CD8-positive, alpha-beta T cell (primary cell): ENCODE measurements at regions of chr19 and their contacts with region 1.

Region 1: DNA sequence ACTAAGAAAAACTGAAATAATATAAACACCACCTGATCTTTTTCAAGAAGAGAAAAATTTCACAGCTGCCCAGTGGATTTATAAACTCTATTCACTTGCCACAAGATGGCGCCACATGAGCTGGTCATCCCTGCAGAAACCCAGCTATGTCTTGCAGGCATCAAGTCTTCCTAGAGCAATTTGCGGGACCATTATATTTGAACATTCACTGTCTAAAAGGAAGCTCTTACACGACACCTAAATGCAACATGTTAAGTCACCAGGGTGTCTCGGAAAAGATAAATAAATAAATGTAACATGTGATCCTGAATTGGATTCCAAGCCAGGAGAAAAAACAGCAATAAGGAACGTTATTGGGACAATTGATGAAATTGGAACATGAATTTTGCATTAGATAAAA is 20.3 kb upstream of the AKT2 start:
- DNase-seq: peak; percentile 49 to 85 (median 78)
- ATAC-seq: peak; percentile 59
- H3K4me3 ChIP-seq: no peak overlapping the region
- H3K4me3 Mint-ChIP-seq: no peak overlapping the region
- H3K27ac ChIP-seq: no peak overlapping the region
- H3K27ac Mint-ChIP-seq: no peak overlapping the region
- H3K4me1 ChIP-seq: no peaks in the 10 kb centered on the region
- H3K4me1 Mint-ChIP-seq: peaks cover 2% of the 10 kb centered on the region
- H3K27me3 ChIP-seq: no peaks in the 10 kb centered on the region
- H3K27me3 Mint-ChIP-seq: no peaks in the 10 kb centered on the region
- CTCF ChIP-seq: peak; percentile 83

Region 2: DNA sequence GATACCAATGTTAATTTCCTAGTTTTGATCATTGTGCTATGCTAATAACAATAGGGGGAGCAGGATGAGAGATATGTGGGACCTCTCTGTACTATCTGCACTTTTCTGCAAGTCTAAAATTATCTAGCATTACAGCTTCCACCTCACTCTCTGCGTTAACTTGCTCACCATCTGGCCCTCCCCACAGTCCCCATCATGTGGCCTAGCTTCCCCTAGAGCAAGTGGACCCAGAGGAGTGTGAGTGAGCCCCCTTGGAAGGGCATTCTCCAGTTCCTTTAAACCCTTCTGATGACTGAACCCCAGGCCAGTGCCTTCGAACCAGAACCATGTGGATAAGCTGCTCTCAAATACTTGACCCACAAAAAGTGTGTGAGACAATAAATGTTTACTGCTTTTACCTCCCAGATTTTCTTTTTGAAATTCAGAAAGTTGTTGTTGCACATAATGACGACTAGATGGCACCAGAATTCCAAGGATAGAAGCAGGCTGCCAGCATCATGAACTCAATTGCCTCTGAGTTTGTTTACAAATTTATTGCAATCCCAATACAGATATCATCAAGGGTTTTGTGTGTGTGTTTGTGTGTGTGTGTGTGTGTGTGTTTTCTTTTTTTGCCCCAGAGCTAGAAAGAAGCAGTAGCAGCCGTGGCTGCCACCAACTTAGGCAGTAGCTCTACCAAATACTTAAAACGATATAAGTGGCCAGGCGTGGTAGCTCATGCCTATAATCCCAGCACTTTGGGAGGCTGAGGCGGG is 165.7 kb before region 1 on chr19:
- CTCF ChIA-PET with region 1: interaction called, 8 read pairs
- POLR2A ChIA-PET with region 1: interaction called, 4 read pairs
- intact Hi-C with region 1: loop called in 1 of 2 experiments (anchors 10 kb)
- DNase-seq: peak in 4 of 9 experiments; percentile 14 to 78 (median 46)
- ATAC-seq: peak; percentile 30
- H3K4me3 ChIP-seq: no peak overlapping the region
- H3K4me3 Mint-ChIP-seq: no peak overlapping the region
- H3K27ac ChIP-seq: no peak overlapping the region
- H3K27ac Mint-ChIP-seq: no peak overlapping the region
- H3K4me1 ChIP-seq: peaks cover 26% of the 10 kb centered on the region
- H3K4me1 Mint-ChIP-seq: peaks cover 26% of the 10 kb centered on the region
- H3K27me3 ChIP-seq: no peaks in the 10 kb centered on the region
- H3K27me3 Mint-ChIP-seq: peaks cover 9% of the 10 kb centered on the region
- CTCF ChIP-seq: peak; percentile 71

Region 3: GRCh38 chr19:40425450-40426287 is 120.3 kb after region 1 on chr19 and contains the start of gene SERTAD1:
- CTCF ChIA-PET with region 1: interaction called, 3 read pairs
- POLR2A ChIA-PET with region 1: no interaction called
- intact Hi-C with region 1: loop called in 1 of 2 experiments (anchors 1 kb)
- DNase-seq: peak; percentile 100
- ATAC-seq: peak; percentile 93
- H3K4me3 ChIP-seq: peak within 1 kb of the TSS; percentile 72 to 92
- H3K4me3 Mint-ChIP-seq: peak within 1 kb of the TSS; percentile 92
- H3K27ac ChIP-seq: peak within 1 kb of the TSS; percentile 91 to 92
- H3K27ac Mint-ChIP-seq: peak within 1 kb of the TSS; percentile 98
- H3K4me1 ChIP-seq: peaks cover 17% of the 10 kb centered on the region
- H3K4me1 Mint-ChIP-seq: peaks cover 28% of the 10 kb centered on the region
- H3K27me3 ChIP-seq: no peaks in the 10 kb centered on the region
- H3K27me3 Mint-ChIP-seq: no peaks in the 10 kb centered on the region
- CTCF ChIP-seq: peak; percentile 55
- total RNA-seq, gene SERTAD1: 36.7 to 38.7 TPM

Region 4: GRCh38 chr19:40598121-40598917 is 292.9 kb after region 1 on chr19:
- CTCF ChIA-PET with region 1: interaction called, 6 read pairs
- POLR2A ChIA-PET with region 1: no interaction called
- intact Hi-C with region 1: loop called in 1 of 2 experiments (anchors 1 kb)
- DNase-seq: peak; percentile 68 to 90 (median 83)
- ATAC-seq: peak; percentile 60
- H3K4me3 ChIP-seq: no peak overlapping the region
- H3K4me3 Mint-ChIP-seq: no peak overlapping the region
- H3K27ac ChIP-seq: no peak overlapping the region
- H3K27ac Mint-ChIP-seq: no peak overlapping the region
- H3K4me1 ChIP-seq: peaks cover 63% of the 10 kb centered on the region
- H3K4me1 Mint-ChIP-seq: peaks cover 50% of the 10 kb centered on the region
- H3K27me3 ChIP-seq: peaks cover 35 to 50% of the 10 kb centered on the region in 2 experiments
- H3K27me3 Mint-ChIP-seq: peaks cover 31% of the 10 kb centered on the region
- CTCF ChIP-seq: peak; percentile 98

Region 5: DNA sequence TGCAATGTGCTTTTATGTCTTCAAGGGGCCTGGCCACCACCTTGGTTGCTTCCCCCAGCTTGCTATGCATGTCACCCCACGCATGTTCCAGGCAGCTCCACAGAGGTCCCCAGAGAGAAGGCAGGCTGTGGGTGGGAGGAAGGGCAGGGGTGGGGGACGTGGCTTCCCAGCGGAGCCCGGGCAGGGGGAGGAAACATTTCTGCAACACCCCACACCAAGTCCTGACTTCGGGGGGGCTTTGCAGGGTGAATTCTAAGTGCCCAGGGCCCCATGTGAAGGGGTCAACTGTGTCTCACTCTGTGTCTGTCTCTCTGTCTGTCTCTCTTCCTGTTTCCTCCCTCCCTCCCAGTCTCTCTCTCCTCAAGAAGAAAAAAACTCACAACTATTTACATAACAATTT is 335.3 kb after region 1 on chr19:
- CTCF ChIA-PET with region 1: interaction called, 16 read pairs
- POLR2A ChIA-PET with region 1: no interaction called
- intact Hi-C with region 1: no loop called
- DNase-seq: peak in 1 of 9 experiments; percentile 52
- ATAC-seq: peak; percentile 26
- H3K4me3 ChIP-seq: no peak overlapping the region
- H3K4me3 Mint-ChIP-seq: no peak overlapping the region
- H3K27ac ChIP-seq: no peak overlapping the region
- H3K27ac Mint-ChIP-seq: no peak overlapping the region
- H3K4me1 ChIP-seq: peaks cover 6% of the 10 kb centered on the region
- H3K4me1 Mint-ChIP-seq: peaks cover 11% of the 10 kb centered on the region
- H3K27me3 ChIP-seq: peaks cover 0 to 3% of the 10 kb centered on the region in 2 experiments
- H3K27me3 Mint-ChIP-seq: peaks cover 2% of the 10 kb centered on the region
- CTCF ChIP-seq: no peak